Heart right ventricle (tissue), 16 donors: ENCODE measurements at regions of chr18 and their contacts with region 1.

Region 1: GRCh38 chr18:13216092-13216582 is 2.4 kb upstream of the LDLRAD4 start:
- DNase-seq: peak; percentile 64 to 78
- ATAC-seq: peak; percentile 42 to 78 (median 74)
- H3K4me3 ChIP-seq: peak overlapping the region in 2 of 10 donors; percentile 75 to 96
- H3K27ac ChIP-seq: peak overlapping the region in 8 of 10 donors; percentile 68 to 98 (median 94)
- H3K4me1 ChIP-seq: peaks cover 5 to 36% (median 33%) of the 10 kb centered on the region in 9 donors
- H3K27me3 ChIP-seq: peaks cover 0 to 29% (median 0%) of the 10 kb centered on the region in 7 donors
- CTCF ChIP-seq: peak; percentile 49 to 91 (median 69)

Region 2: GRCh38 chr18:13302457-13303225 is 86.5 kb after region 1 on chr18:
- intact Hi-C with region 1: loop called in 3 of 10 experiments (anchors 5 to 10 kb)
- DNase-seq: peak in 1 of 2 donors; percentile 32
- ATAC-seq: peak in 3 of 8 donors; percentile 11 to 20 (median 20)
- H3K4me3 ChIP-seq: no peak overlapping the region
- H3K27ac ChIP-seq: peak overlapping the region in 3 of 10 donors; percentile 0 to 41 (median 8)
- H3K4me1 ChIP-seq: peaks cover 23 to 66% (median 43%) of the 10 kb centered on the region in 9 donors
- H3K27me3 ChIP-seq: no peaks in the 10 kb centered on the region
- CTCF ChIP-seq: no peak

Region 3: DNA sequence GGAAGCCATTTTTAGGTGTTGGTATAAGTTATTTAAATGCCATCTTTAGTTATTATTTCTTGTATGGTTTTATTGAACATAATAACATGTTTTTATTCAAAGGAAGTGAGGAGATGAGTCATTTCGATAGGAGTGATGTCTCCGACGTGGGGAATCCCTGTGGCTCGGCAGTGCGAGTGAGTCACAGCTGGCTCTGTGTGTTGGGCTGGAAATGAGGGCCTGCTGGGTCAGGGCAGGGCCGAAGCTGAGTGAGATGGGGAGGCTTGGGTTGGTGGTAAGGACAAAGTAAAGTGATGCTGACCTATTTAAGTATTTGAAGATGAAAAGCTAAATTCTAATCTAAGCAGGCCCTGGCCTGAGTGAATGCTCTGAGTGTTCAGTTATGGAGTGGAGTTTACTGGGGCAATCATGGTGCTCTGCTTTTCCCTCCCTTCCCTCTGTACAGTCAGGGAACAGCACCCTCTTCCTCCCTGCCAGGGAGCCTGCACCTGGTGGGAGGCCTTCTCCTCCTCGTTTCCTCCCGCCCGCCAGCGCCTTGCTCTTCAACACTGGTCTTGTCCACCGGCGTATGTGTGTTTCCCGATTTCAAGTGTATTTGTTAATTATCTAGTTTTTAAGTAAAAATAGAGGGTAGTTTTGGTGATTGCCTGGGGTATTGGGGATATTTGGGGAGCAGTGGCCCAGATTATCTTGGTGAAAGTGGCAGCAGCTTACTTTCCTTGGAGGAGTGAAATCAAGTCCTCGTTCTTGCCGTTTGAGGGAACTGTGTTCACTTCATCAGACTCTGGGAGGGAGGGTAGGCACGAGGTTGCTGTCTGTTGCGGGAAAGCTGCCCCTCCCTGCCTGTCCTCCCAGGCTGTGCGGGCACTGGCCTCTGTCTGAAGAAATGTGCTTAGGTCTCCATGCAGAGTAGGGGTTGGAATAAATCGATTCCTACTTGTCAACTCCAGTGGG is 159.4 kb after region 1 on chr18:
- intact Hi-C with region 1: loop called in 4 of 10 experiments (anchors 5 to 10 kb)
- DNase-seq: peak; percentile 59 to 76
- ATAC-seq: peak; percentile 51 to 89 (median 78)
- H3K4me3 ChIP-seq: no peak overlapping the region
- H3K27ac ChIP-seq: peak overlapping the region in 8 of 10 donors; percentile 3 to 75 (median 64)
- H3K4me1 ChIP-seq: peaks cover 11 to 78% (median 56%) of the 10 kb centered on the region in 9 donors
- H3K27me3 ChIP-seq: no peaks in the 10 kb centered on the region
- CTCF ChIP-seq: peak in 1 of 9 donors; percentile 30

Region 4: GRCh38 chr18:13447626-13448334 is 231.6 kb after region 1 on chr18:
- intact Hi-C with region 1: loop called in 1 of 10 experiments (anchors 5 kb)
- DNase-seq: peak in 1 of 2 donors; percentile 34
- ATAC-seq: peak in 4 of 8 donors; percentile 15 to 57 (median 40)
- H3K4me3 ChIP-seq: no peak overlapping the region
- H3K27ac ChIP-seq: peak overlapping the region in 2 of 10 donors; percentile 23 to 46
- H3K4me1 ChIP-seq: peaks cover 14 to 75% (median 32%) of the 10 kb centered on the region in 9 donors
- H3K27me3 ChIP-seq: no peaks in the 10 kb centered on the region
- CTCF ChIP-seq: no peak

Region 5: GRCh38 chr18:13464432-13465123 is 248.4 kb after region 1 on chr18:
- intact Hi-C with region 1: no loop called
- DNase-seq: peak; percentile 62 to 68
- ATAC-seq: peak; percentile 82 to 93 (median 90)
- H3K4me3 ChIP-seq: peak overlapping the region in 5 of 10 donors; percentile 10 to 47 (median 16)
- H3K27ac ChIP-seq: peak overlapping the region in 8 of 10 donors; percentile 15 to 84 (median 54)
- H3K4me1 ChIP-seq: peaks cover 0 to 49% (median 42%) of the 10 kb centered on the region in 9 donors
- H3K27me3 ChIP-seq: no peaks in the 10 kb centered on the region
- CTCF ChIP-seq: no peak

Region 6: GRCh38 chr18:13629841-13630715 is 413.9 kb after region 1 on chr18:
- intact Hi-C with region 1: loop called in 8 of 10 experiments (anchors 1 to 10 kb)
- DNase-seq: peak in 1 of 2 donors; percentile 80
- ATAC-seq: peak; percentile 78 to 93 (median 90)
- H3K4me3 ChIP-seq: no peak overlapping the region
- H3K27ac ChIP-seq: peak overlapping the region in 7 of 10 donors; percentile 34 to 61 (median 43)
- H3K4me1 ChIP-seq: peaks cover 6 to 32% (median 22%) of the 10 kb centered on the region in 9 donors
- H3K27me3 ChIP-seq: no peaks in the 10 kb centered on the region
- CTCF ChIP-seq: peak; percentile 69 to 91 (median 83)